MCF 10A (cell line): ENCODE measurements at regions of chr2 and their contacts with region 1.

Region 1: DNA sequence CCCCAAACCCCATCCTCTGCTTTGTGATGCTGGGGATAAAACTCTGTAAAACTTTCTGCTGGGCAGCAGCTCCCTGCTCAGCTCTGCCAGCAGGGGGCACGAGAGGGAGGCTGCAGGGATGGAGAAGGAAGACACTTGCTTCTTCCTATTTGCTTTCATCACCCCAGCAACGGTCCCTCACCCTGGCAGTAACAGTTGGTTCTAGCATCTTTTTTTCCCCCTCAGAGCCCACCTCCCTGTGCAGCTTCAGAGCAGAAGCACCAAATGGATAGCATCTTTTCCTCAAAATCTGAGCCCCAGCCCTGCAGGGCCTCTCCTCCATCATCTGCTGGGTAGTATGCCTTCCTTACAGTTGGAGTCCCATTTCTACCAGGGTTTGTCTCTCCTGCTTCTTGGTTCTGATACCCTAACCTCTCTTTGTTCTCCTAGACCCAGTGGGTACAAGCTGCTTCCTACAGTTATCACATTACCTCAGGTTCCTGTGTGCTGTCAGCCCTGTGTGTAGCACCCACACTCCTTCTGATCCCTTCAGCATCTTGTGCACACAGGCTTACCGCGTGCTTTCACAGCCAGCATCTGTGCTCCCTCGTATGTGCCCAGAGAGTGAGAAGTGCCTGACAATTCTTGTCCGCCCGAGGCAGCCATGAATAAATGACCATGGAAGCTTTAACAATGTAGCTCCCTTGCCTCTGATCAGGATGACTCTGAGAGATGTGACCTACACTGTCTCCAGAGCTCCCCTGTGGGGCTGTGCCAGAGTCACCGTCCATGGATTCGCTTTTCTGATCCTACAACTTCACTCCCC is 14.5 kb downstream of the CKAP2L start:
- DNase-seq: peak; percentile 70
- H3K4me3 Mint-ChIP-seq: no peak overlapping the region
- H3K27ac Mint-ChIP-seq: peak overlapping the region; percentile 74
- H3K4me1 Mint-ChIP-seq: peaks cover 23% of the 10 kb centered on the region
- H3K27me3 Mint-ChIP-seq: no peaks in the 10 kb centered on the region
- CTCF ChIP-seq: peak; percentile 86

Region 2: GRCh38 chr2:112087346-112088020 is 662.5 kb before region 1 on chr2:
- CTCF ChIA-PET with region 1: no interaction called
- POLR2A ChIA-PET with region 1: no interaction called
- intact Hi-C with region 1: no loop called
- DNase-seq: no peak
- H3K4me3 Mint-ChIP-seq: no peak overlapping the region
- H3K27ac Mint-ChIP-seq: no peak overlapping the region
- H3K4me1 Mint-ChIP-seq: peaks cover 8% of the 10 kb centered on the region
- H3K27me3 Mint-ChIP-seq: no peaks in the 10 kb centered on the region
- CTCF ChIP-seq: no peak

Region 3: DNA sequence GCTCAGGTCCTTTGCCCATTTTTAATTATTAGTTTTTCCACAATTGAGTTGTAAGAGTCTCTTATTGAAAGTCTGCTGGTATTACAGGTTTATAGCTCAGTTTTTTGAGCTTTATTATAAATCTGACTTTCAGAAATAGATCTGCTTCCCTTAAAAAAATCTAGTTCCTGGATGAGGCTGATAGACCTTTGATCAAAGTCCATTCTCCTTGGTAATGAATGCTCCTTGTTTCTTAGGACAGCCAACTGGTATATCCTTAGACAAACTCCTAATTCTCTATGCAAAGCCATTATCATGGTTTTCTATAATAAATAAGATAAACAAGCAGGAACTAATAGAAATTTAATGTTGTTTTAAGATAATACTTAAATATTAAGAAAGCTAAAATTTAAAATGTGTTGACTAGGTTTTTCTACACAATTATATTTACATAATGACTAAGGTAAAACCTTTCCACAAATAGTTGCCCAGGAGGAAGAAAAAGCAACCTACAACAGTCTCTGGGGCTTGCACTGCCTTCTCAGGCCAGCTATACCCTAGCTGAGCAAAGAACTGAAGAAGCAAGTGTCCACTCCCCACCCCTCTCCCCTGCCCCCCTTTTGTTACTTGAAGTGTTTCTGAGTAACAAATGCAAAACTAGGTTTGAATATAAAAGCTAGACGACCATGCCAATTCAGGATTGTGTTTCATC is 12.3 kb before region 1 on chr2:
- CTCF ChIA-PET with region 1: interaction called, 37 read pairs
- POLR2A ChIA-PET with region 1: interaction called, 7 read pairs
- intact Hi-C with region 1: no loop called
- DNase-seq: no peak
- H3K4me3 Mint-ChIP-seq: no peak overlapping the region
- H3K27ac Mint-ChIP-seq: no peak overlapping the region
- H3K4me1 Mint-ChIP-seq: no peaks in the 10 kb centered on the region
- H3K27me3 Mint-ChIP-seq: no peaks in the 10 kb centered on the region
- CTCF ChIP-seq: no peak

Region 4: GRCh38 chr2:112811841-112812306 is 61.9 kb after region 1 on chr2:
- CTCF ChIA-PET with region 1: interaction called, 12 read pairs
- POLR2A ChIA-PET with region 1: interaction called, 3 read pairs
- intact Hi-C with region 1: no loop called
- DNase-seq: peak; percentile 82
- H3K4me3 Mint-ChIP-seq: no peak overlapping the region
- H3K27ac Mint-ChIP-seq: peak overlapping the region; percentile 97
- H3K4me1 Mint-ChIP-seq: peaks cover 46% of the 10 kb centered on the region
- H3K27me3 Mint-ChIP-seq: no peaks in the 10 kb centered on the region
- CTCF ChIP-seq: no peak

Region 5: DNA sequence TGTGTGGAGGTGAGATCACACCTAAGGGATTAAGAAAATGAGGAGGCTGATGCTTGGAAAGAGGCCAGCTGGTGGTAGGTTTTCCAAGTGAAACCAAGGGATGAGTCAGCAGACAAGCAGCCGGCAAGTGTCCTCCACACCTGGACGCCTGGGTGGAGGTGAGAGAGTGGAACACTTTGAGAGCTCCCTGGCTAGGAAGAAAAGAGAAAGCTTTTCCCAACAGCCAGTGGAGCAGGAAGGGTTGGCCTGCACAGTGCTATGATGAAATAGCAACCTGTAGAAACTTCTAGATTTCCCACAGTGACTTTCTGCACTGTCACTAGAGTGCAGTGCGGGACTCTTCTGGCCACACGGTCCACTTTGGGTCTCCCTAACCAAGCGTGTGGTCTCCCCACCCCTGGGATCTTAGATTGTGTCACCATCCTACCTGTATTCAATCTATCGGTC is 141.5 kb after region 1 on chr2:
- CTCF ChIA-PET with region 1: interaction called, 120 read pairs
- POLR2A ChIA-PET with region 1: interaction called, 3 read pairs
- intact Hi-C with region 1: no loop called
- DNase-seq: peak; percentile 98
- H3K4me3 Mint-ChIP-seq: no peak overlapping the region
- H3K27ac Mint-ChIP-seq: peak overlapping the region; percentile 42
- H3K4me1 Mint-ChIP-seq: no peaks in the 10 kb centered on the region
- H3K27me3 Mint-ChIP-seq: no peaks in the 10 kb centered on the region
- CTCF ChIP-seq: no peak

Region 6: GRCh38 chr2:112958428-112959108 is 208.6 kb after region 1 on chr2:
- CTCF ChIA-PET with region 1: interaction called, 62 read pairs
- POLR2A ChIA-PET with region 1: no interaction called
- intact Hi-C with region 1: no loop called
- DNase-seq: peak; percentile 85
- H3K4me3 Mint-ChIP-seq: no peak overlapping the region
- H3K27ac Mint-ChIP-seq: no peak overlapping the region
- H3K4me1 Mint-ChIP-seq: no peaks in the 10 kb centered on the region
- H3K27me3 Mint-ChIP-seq: no peaks in the 10 kb centered on the region
- CTCF ChIP-seq: peak; percentile 69